T-cell (primary cell): ENCODE measurements at regions of chr19 and their contacts with region 1.

Region 1: GRCh38 chr19:45478454-45479238 is 10.8 kb downstream of the FOSB start:
- DNase-seq: peak; percentile 74 to 96 (median 85)
- ATAC-seq: peak; percentile 64 to 87 (median 82)
- H3K4me3 ChIP-seq: peak overlapping the region; percentile 56 to 62
- H3K4me3 Mint-ChIP-seq: peak overlapping the region; percentile 69 to 81 (median 80)
- H3K27ac ChIP-seq: peak overlapping the region; percentile 96
- H3K27ac Mint-ChIP-seq: peak overlapping the region; percentile 87 to 99
- H3K4me1 ChIP-seq: peaks cover 7 to 30% of the 10 kb centered on the region in 2 experiments
- H3K4me1 Mint-ChIP-seq: peaks cover 27 to 50% (median 35%) of the 10 kb centered on the region in 3 donors
- H3K27me3 ChIP-seq: peaks cover 4% of the 10 kb centered on the region in 2 experiments
- H3K27me3 Mint-ChIP-seq: peaks cover 4 to 5% of the 10 kb centered on the region in 2 donors

Region 2: DNA sequence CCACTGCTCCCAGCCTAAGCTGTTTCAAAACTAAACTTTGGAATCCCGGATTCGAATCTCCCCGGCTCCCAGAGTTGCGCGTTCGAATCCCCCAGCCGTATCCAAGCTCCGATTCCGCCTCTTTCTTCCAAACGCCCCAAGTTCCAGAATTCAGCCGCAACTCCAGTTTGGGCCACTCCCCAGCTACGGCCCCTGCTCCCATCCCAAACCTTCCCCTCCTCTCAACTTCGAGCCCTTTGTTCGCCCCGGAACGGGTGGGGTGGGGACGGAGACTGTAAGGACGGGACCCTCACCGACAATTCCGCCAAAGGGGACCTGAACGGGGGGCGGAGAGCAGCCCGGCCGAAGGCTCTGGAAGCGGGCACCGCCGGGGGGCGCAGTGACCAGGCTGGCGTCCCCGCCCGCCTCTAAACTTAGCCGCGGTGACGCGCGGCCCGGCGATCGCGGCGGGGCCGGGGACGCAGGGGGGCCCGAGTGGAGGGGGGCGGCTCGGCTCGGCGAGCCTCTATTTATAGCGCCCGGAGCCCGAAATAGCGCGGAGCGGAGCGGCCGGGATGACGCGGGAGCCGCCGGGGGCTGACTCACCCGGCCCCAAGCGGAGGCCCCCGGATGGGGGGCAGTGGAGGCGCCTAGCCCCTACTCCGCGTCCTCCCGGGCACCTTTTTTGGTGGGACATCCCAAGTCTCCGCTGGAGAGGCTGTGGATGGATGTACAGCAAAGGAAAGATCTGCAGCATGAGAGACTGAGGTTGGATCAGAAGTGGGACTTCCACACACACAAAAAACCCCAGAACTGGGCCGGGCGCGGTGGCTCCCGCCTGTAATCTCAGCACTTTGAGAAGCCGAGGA is 50.0 kb before region 1 on chr19:
- CTCF ChIA-PET with region 1: interaction called, 6 to 10 read pairs
- POLR2A ChIA-PET with region 1: interaction called, 3 to 8 read pairs
- DNase-seq: peak in 1 of 35 experiments; percentile 38
- ATAC-seq: no peak
- H3K4me3 ChIP-seq: peak overlapping the region; percentile 41 to 46
- H3K4me3 Mint-ChIP-seq: peak overlapping the region; percentile 69 to 75 (median 71)
- H3K27ac ChIP-seq: no peak overlapping the region
- H3K27ac Mint-ChIP-seq: no peak overlapping the region
- H3K4me1 ChIP-seq: peaks cover 0 to 30% of the 10 kb centered on the region in 2 experiments
- H3K4me1 Mint-ChIP-seq: peaks cover 11 to 26% (median 23%) of the 10 kb centered on the region in 3 donors
- H3K27me3 ChIP-seq: peaks cover 0 to 12% of the 10 kb centered on the region in 2 experiments
- H3K27me3 Mint-ChIP-seq: peaks cover 4 to 5% of the 10 kb centered on the region in 2 donors

Region 3: DNA sequence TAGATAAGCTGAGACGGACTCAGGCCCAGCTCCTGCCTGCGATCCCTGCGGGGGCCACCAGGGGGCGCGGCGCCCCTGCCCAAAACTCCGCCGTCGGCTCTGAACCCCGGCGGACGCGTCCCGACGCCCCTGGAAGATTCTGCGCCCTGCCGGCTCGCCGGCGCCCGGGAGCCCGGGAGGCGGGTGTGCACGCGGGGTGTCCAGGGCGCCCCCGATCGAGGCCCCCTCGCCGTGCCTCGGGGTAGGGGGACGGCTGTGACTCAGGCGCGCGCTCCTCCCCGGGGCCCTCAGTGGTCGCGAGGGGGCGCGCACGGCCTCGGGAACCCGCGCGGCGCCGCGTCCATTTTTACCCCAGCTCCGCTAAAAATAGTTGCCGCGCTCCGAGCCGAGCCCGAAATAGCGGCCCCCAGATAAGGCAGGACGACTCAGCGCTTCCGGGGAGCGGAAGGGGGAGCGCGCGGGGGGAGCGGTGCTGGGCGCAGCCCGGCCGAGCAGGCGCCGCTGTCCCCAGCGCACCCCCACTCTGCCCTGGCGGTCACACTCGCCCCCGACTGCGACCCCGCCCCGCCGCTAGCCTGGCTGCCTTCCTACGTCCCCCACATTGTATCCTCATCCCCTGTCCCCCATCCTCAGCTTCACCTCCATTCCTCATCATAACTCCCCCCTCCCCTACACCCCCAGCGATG is 38.9 kb before region 1 on chr19:
- CTCF ChIA-PET with region 1: interaction called, 29 to 135 read pairs
- POLR2A ChIA-PET with region 1: interaction called, 10 to 15 read pairs
- DNase-seq: peak; percentile 63 to 92 (median 80)
- ATAC-seq: peak; percentile 67 to 83 (median 80)
- H3K4me3 ChIP-seq: peak overlapping the region; percentile 32 to 49
- H3K4me3 Mint-ChIP-seq: peak overlapping the region; percentile 64 to 77 (median 75)
- H3K27ac ChIP-seq: peak overlapping the region; percentile 69
- H3K27ac Mint-ChIP-seq: peak overlapping the region in 1 of 2 donors; percentile 11
- H3K4me1 ChIP-seq: peaks cover 9 to 44% of the 10 kb centered on the region in 2 experiments
- H3K4me1 Mint-ChIP-seq: peaks cover 28 to 38% (median 34%) of the 10 kb centered on the region in 3 donors
- H3K27me3 ChIP-seq: peaks cover 0 to 7% of the 10 kb centered on the region in 2 experiments
- H3K27me3 Mint-ChIP-seq: no peaks in the 10 kb centered on the region

Region 4: DNA sequence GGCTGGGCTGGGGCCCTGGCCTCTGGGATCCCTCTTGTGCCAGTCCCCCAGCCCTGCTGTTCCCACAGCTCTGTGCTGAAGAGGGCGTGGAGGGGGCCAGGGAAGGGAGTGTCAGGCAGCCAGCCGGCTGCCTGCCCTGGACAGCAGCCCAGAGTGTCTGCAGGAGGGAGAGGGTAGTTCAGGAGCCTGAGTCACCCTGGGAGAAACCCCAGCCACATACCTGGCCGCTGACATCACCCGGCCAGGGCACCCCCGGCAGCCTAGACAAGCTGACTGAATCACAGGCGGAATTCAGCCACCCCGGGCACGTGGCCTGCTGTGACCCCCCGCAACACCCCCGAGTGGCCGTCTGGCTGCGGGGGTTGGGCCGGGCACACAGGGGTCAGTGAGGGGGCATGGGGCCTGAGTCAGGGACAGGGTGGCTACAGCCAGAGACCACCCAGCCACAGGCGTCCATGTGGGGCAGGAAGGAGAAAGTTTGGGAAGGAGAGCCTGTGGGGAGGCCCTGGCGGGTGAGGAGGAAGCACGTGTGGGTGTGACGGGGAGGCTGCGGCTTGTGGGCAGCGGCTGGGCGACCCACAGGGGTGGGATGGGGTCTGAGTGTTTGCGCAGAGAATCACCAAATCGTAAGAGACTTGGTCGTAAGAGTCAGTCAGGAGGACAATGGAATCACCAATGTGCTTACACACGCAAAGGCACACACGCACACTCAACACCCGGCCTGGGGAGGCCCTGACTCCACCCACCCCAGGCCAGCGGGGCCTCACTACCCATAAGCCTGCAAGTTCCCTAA is 22.7 kb before region 1 on chr19:
- CTCF ChIA-PET with region 1: interaction called in 1 of 2 experiments, 5 read pairs
- POLR2A ChIA-PET with region 1: interaction called in 1 of 2 experiments, 10 read pairs
- DNase-seq: peak in 30 of 35 experiments; percentile 35 to 80 (median 54)
- ATAC-seq: peak; percentile 21 to 51 (median 40)
- H3K4me3 ChIP-seq: no peak overlapping the region
- H3K4me3 Mint-ChIP-seq: peak overlapping the region in 2 of 3 donors; percentile 9 to 50
- H3K27ac ChIP-seq: peak overlapping the region; percentile 1
- H3K27ac Mint-ChIP-seq: peak overlapping the region in 1 of 2 donors; percentile 11
- H3K4me1 ChIP-seq: peaks cover 10 to 36% of the 10 kb centered on the region in 2 experiments
- H3K4me1 Mint-ChIP-seq: peaks cover 29 to 37% (median 36%) of the 10 kb centered on the region in 3 donors
- H3K27me3 ChIP-seq: peaks cover 0 to 16% of the 10 kb centered on the region in 2 experiments
- H3K27me3 Mint-ChIP-seq: peaks cover 0 to 3% of the 10 kb centered on the region in 2 donors